ENCODE measurements at regions of chr15 and their contacts with region 1.

Region 1: DNA sequence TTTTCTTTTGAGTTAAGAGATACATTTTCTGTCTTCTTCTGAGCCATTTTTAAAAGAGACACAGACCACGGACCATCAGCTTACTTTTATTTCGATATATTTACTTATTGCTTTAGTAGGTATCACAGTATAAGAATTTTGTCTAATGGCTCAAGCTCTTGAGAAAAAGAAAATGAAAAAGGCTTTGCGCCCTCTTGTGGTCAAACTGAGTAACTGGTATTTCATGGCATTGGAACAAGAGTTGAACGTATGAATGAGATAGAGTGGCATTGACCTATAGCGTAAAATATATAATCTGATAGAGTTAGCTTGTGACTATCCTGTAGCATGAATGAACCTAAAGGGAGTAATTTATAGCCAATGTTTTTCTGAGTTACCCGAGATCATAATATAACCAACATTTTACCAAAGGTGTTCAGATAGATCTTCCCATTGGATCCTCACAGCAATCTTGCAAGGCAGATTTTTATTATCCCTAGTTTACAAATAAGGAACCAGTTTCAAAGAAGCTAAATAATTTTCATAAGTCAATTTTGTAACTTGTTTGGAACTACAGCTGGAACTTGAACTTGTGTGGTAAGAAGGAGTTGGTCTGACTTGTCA is 154.6 kb downstream of the POLR2M start:
- DNase-seq: peak; percentile 50
- ATAC-seq: no peak
- H3K4me3 ChIP-seq: no peak overlapping the region
- H3K27ac ChIP-seq: no peak overlapping the region
- H3K4me1 ChIP-seq: no peaks in the 10 kb centered on the region
- H3K27me3 ChIP-seq: peaks cover 0 to 1% of the 10 kb centered on the region in 2 experiments; a peak in 1 of 5 replicates
- CTCF ChIP-seq: peak; percentile 70
- EP300 ChIP-seq: no peak
- POLR2A ChIP-seq: no peak
- RAD21 ChIP-seq: no peak

Region 2: GRCh38 chr15:57561041-57561711 is 300.0 kb before region 1 on chr15:
- CTCF ChIA-PET with region 1: interaction called, 11 read pairs
- POLR2A ChIA-PET with region 1: no interaction called
- in situ Hi-C with region 1: no loop called
- intact Hi-C with region 1: loop called (anchors 5 kb)
- DNase-seq: peak; percentile 62
- ATAC-seq: peak; percentile 89
- H3K4me3 ChIP-seq: no peak overlapping the region
- H3K27ac ChIP-seq: no peak overlapping the region
- H3K4me1 ChIP-seq: peaks cover 11% of the 10 kb centered on the region
- H3K27me3 ChIP-seq: 0 out of 5 replicates have a peak, but pooled peaks cover 0 to 4% of the 10 kb centered on the region in 2 experiments
- CTCF ChIP-seq: peak; percentile 84
- EP300 ChIP-seq: no peak
- POLR2A ChIP-seq: no peak
- RAD21 ChIP-seq: peak; percentile 65

Region 3: DNA sequence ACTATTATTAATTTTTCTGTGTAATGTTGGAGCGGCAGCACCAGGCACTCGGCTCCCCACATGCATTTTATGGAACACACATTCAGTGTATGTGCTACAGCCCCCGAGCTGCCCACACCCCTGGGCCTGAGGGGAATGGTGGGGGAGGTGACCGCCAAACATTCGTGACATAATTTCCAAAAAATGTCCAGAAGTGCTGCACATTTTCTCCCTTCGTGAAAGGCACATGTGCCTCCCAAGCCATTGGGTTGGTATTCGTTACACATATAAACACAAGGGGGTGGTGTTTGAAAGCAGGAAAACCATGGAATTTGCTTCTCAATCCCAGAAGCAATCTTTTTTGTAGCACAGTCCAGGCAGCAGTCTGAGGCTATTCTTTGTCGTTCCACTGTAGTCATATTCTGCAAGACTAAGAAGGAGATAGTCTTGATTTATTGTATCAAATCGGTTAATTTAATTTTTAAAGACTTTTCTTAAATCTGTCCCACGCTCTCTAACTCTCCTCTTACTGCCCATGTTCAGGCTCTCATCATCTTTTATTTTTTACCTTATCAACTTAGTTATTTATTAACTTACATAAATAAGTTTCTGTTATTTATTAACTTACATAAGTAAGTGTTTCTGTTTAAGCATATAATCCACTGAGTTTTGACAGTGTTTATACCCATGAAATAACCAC is 193.8 kb before region 1 on chr15:
- CTCF ChIA-PET with region 1: interaction called, 7 read pairs
- POLR2A ChIA-PET with region 1: no interaction called
- in situ Hi-C with region 1: no loop called
- intact Hi-C with region 1: loop called (anchors 5 kb)
- DNase-seq: peak; percentile 16
- ATAC-seq: peak; percentile 70
- H3K4me3 ChIP-seq: no peak overlapping the region
- H3K27ac ChIP-seq: no peak overlapping the region
- H3K4me1 ChIP-seq: peaks cover 6% of the 10 kb centered on the region; the same call in 1 of the 2 replicates
- H3K27me3 ChIP-seq: peaks cover 0 to 11% of the 10 kb centered on the region in 2 experiments; a peak in 1 of 5 replicates
- CTCF ChIP-seq: peak; percentile 52
- EP300 ChIP-seq: no peak
- POLR2A ChIP-seq: no peak
- RAD21 ChIP-seq: no peak

Region 4: GRCh38 chr15:57732526-57733331 is 128.4 kb before region 1 on chr15:
- CTCF ChIA-PET with region 1: interaction called, 5 read pairs
- POLR2A ChIA-PET with region 1: no interaction called
- in situ Hi-C with region 1: no loop called
- intact Hi-C with region 1: loop called (anchors 5 kb)
- DNase-seq: peak; percentile 49
- ATAC-seq: peak; percentile 81
- H3K4me3 ChIP-seq: no peak overlapping the region
- H3K27ac ChIP-seq: no peak overlapping the region
- H3K4me1 ChIP-seq: peaks cover 5% of the 10 kb centered on the region
- H3K27me3 ChIP-seq: no peaks in the 10 kb centered on the region; a peak in 1 of 5 replicates
- CTCF ChIP-seq: peak; percentile 71
- EP300 ChIP-seq: no peak
- POLR2A ChIP-seq: no peak
- RAD21 ChIP-seq: no peak

Region 5: DNA sequence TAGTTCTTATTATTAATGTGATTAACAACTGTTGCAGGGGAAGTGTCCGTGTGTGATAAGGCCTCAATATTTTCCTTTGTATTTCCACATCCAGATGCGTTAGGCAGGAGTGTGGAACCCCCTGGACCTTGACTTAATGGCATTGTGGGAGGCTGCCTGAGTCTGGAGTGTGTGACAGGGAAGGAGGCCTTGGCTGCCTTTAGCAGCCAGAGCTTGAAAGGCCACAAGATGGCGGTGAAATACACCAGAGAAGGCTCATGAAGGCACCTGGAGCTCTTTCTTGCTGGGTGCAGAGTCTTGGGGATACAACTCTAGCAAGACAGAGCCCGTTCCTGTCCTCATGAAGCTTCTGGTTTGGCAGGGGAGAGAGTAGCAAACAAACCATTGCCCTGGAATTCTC is 117.7 kb before region 1 on chr15:
- CTCF ChIA-PET with region 1: no interaction called
- POLR2A ChIA-PET with region 1: no interaction called
- in situ Hi-C with region 1: loop called (anchors 5 kb)
- intact Hi-C with region 1: no loop called
- DNase-seq: peak; percentile 4
- ATAC-seq: peak; percentile 51
- H3K4me3 ChIP-seq: no peak overlapping the region
- H3K27ac ChIP-seq: no peak overlapping the region
- H3K4me1 ChIP-seq: 0 out of 2 replicates have a peak, but pooled peaks cover 8% of the 10 kb centered on the region
- H3K27me3 ChIP-seq: peaks cover 0 to 11% of the 10 kb centered on the region in 2 experiments; a peak in 1 of 5 replicates
- CTCF ChIP-seq: peak; percentile 47
- EP300 ChIP-seq: no peak
- POLR2A ChIP-seq: no peak
- RAD21 ChIP-seq: no peak

Region 6: DNA sequence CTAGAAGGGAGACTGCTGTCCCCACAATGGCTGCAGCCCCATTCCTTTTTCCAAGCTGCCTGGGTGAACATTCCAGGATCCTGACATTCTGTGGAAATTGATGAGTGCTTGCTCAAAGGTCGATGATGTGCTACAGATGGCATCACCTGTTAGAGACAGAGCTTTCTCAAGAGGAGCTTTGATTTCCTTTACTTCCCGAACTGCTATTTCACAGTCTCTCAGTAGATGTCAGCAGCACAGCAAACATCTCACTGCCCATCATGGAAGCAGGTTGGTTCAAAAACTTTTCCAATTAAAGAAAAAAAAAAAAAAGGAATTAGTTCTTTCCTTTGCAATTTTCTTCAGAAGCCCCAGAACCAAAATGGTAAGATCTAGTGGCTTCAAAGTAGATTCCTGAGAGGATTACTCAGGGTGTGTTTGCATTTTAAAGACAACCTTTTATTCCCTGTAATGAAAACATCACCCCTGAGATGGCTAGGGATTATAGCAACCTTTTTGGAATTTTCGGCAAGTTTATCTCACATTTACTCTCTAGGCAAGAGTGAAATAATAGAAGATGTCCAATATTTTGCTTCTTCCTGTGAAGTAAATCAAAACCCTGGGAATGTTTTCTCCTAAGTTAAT is 109.8 kb before region 1 on chr15:
- CTCF ChIA-PET with region 1: interaction called, 5 read pairs
- POLR2A ChIA-PET with region 1: no interaction called
- in situ Hi-C with region 1: no loop called
- intact Hi-C with region 1: loop called (anchors 1 kb)
- DNase-seq: peak; percentile 3
- ATAC-seq: no peak
- H3K4me3 ChIP-seq: no peak overlapping the region
- H3K27ac ChIP-seq: no peak overlapping the region
- H3K4me1 ChIP-seq: 0 out of 2 replicates have a peak, but pooled peaks cover 8% of the 10 kb centered on the region
- H3K27me3 ChIP-seq: peaks cover 0 to 11% of the 10 kb centered on the region in 2 experiments; a peak in 2 of 5 replicates
- CTCF ChIP-seq: peak; percentile 49
- EP300 ChIP-seq: no peak
- POLR2A ChIP-seq: no peak
- RAD21 ChIP-seq: no peak

Region 7: GRCh38 chr15:57903626-57904025 is 42.5 kb after region 1 on chr15:
- CTCF ChIA-PET with region 1: no interaction called
- POLR2A ChIA-PET with region 1: no interaction called
- in situ Hi-C with region 1: no loop called
- intact Hi-C with region 1: no loop called
- DNase-seq: no peak
- ATAC-seq: no peak
- H3K4me3 ChIP-seq: no peak overlapping the region
- H3K27ac ChIP-seq: no peak overlapping the region
- H3K4me1 ChIP-seq: no peaks in the 10 kb centered on the region
- H3K27me3 ChIP-seq: peaks cover 0 to 4% of the 10 kb centered on the region in 2 experiments; a peak in 1 of 5 replicates
- CTCF ChIP-seq: no peak
- EP300 ChIP-seq: no peak
- POLR2A ChIP-seq: no peak
- RAD21 ChIP-seq: no peak

Measured in HepG2 (cell line).